Head of caudate nucleus (tissue), 42 donors: ENCODE measurements at regions of chr5 and their contacts with region 1.

Region 1: DNA sequence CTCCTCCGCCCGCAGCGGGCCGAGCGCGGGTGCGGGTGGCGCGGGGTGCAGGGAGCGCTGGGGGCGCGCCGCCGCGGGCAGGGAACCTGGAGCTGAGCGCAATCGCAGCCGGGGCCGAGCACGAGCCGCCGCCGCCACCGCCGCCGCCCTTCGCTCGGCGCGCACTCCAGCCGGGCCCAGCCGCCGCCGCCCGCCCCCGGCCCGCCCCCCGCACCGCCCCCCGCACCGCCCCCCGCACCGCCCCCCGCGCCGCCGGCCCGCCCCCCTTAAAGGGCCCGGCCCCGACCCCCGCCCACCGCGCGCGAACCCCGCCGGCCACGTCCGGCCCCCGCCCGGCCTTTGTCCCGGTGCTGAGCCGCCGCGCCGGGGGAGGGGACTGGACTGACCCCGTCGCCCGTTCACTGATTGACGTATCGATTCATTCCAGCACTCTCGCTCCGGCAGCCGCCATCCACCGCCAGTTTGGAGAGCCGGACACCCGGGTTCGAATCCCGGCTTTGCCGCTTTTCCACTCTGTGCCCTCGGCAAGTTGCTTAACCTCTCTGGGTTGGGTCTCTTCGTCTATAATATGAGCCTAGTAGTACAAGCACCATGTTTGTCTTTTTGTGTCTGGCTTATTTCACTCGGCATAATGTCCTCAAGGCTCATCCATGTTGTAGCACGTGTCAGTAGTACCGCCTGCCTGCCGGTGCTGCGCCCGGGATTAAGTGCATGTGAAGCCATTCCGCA is at the start of gene SH3PXD2B:
- DNase-seq: peak in 38 of 42 donors; percentile 34 to 83 (median 66)

Region 2: DNA sequence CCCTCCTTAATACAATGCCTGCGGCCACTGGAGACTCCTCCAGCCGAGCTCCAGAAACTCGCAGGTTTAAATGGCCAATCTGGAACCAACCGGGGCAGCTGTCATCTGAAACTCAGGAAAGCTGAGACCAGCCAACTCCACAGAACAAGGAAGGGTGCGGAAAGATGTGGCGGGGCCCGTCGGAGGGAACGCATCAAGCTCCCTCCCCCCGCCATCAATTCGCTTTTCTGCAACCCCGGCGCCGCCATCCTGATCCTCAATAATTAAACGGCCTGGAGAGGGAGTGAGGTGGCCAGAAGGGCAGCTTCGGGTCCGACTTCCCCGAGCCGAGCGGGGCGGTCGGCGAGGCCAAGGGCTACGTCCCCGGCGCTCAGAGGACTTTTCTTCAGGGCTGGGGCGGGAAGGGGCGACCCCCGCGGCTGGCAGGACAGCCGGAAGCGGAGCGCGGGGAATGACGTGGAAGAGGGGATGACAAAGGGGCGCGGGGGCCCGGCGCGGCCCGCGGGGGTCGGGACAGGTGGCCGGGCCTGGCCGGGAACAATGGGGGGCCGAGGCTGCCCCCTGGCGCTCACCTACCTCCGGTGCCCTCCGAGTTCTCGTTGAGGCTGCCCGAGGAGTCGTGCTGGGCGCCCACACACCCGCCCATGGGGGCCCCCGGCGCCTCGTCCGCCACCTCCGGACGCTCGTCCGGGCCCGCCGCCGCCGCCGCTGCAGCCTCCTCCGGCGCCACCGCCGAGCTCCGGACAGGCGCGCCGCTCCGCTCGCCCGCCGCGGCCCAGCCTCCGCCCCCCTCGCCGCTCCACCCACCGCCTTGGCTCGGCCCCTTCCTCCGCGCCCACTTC is 171.3 kb before region 1 on chr5 and contains the start of gene UBTD2:
- intact Hi-C with region 1: loop called (anchors 10 kb)
- DNase-seq: peak; percentile 18 to 91 (median 78)

Region 3: GRCh38 chr5:172370648-172371545 is 83.6 kb before region 1 on chr5:
- intact Hi-C with region 1: no loop called
- DNase-seq: peak in 5 of 42 donors; percentile 17 to 61 (median 41)

Region 4: GRCh38 chr5:172407822-172408221 is 46.7 kb before region 1 on chr5:
- intact Hi-C with region 1: loop called (anchors 5 kb)
- DNase-seq: peak in 3 of 42 donors; percentile 19 to 70 (median 45)